Posterior cingulate gyrus (tissue), 11 donors: ENCODE measurements at regions of chr15 and their contacts with region 1.

Region 1: GRCh38 chr15:82749951-82750830 is 40.5 kb upstream of the AP3B2 start:
- DNase-seq: peak; percentile 91 to 99 (median 94)

Region 2: DNA sequence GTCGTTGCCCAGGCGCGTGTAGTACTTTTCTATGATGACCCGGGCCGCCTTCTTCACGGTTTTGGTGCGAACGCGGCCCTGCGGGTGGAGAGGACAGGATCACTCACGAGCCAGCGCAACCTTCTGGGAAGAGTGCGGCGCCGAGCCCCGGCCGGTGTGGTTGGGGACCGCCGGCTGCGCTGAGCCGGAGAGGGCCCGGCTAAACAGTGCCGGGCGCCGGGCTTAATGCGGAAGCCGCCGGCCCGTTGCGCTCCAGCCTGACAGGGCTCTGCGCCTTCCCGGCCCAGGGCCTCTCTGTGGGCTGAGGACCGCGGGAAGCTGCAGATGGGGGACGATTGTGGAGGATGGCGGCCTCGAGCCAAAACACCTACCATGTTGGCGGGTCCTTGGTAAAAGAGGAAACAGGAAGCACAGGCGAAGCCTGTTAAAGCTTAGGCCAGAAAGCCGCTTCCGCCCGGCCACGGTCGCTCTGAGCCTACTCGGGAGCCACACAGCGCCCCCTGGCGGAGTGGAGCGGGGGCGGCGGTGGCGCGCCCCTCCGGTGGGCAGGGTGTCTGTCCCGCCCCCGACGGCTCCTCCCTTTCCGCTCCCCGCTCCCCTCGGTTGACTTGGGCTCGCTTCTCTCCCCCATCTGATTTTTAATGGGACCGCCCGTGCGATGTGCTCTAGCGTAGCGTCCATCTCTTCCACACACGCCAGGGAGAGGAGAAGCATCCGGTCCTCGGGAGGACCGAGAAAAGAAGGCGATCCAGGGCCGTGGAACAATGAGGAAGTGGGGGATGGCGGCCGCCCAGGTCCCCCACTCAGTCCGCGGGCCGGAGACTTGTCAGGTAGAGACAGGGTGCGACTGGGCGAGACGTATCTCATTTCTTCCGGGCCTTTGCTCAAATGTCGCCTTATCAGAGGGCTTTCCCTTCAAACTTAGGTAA is 209.9 kb before region 1 on chr15 and contains the start of gene RPS17:
- intact Hi-C with region 1: loop called (anchors 5 kb)
- DNase-seq: peak; percentile 88 to 99 (median 94)

Region 3: GRCh38 chr15:82709421-82710207 is 40.6 kb before region 1 on chr15 and contains the start of gene AP3B2:
- intact Hi-C with region 1: loop called (anchors 1 kb)
- DNase-seq: peak; percentile 30 to 97 (median 78)

Region 4: DNA sequence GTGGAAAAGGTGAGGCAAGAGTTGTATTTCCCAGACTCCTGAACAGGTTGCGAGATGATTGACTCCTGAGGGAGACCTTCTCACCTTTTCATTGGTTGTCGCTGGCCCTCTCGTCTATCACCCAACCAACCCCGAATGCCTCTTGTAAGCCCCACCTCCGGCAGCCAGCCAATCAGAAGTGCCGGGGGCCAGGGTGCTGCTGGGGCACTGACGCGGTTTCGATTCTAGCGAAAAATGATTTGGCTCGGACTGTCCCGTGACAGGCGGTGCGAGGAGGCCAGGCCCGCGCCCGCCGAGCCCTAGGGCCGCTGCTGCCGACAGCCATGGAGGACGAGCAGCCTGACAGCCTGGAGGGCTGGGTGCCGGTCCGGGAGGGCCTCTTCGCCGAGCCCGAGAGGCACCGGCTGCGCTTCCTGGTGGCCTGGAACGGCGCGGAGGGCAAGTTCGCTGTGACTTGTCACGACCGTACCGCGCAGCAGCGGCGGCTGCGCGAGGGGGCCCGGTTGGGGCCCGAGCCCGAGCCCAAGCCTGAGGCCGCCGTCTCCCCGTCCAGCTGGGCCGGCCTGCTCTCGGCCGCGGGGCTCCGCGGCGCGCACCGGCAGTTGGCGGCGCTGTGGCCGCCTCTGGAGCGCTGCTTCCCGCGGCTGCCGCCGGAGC is 59.3 kb after region 1 on chr15 and contains the start of gene WHAMM:
- intact Hi-C with region 1: loop called (anchors 2 kb)
- DNase-seq: peak; percentile 96 to 100 (median 99)